ENCODE measurements at regions of chr22 and their contacts with region 1.

Region 1: GRCh38 chr22:49434101-49434611 is 393.5 kb downstream of the BRD1 start:
- DNase-seq: peak; percentile 58
- ATAC-seq: peak; percentile 73
- H3K4me3 ChIP-seq: no peak overlapping the region
- H3K27ac ChIP-seq: no peak overlapping the region
- H3K4me1 ChIP-seq: no peaks in the 10 kb centered on the region
- H3K27me3 ChIP-seq: peaks cover 84% of the 10 kb centered on the region
- CTCF ChIP-seq: peak; percentile 64

Region 2: DNA sequence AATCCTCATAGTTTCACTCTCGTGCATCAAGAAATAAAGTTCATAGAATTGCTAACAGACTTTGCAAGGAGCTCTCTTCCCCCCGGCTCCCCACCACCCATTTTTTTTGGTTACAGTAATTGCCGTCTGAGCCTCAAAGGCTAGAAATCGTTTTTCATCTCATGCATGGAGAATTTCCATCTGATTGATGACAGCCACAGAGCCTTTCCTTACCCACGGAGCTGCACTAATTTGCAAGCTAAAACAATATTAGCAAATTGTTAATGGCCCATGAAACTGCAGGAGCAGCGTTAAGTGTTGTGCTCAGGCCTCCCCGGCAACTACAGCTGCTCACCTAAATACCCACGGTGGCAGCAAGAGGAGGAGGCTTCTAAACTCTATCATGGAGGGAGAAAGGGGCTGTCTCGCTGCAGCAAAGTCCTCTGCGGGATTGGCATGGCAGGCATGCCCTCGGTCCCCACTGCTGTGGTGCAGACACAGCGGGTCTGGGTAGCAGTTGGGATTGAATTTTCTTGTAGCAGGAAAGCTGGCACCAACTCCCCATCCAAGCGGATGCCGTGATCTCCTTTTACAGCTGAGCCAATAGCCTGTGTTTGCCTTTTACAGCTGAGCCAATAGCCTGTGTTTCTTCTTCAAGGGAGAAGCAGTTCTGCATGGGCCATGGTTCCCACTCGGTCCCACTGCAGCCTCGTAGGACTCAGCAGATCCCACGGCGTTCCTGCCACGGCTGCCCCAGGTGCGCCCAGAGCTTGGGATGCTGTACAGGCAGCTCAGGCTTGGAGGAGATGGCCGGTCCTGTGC is 18.8 kb before region 1 on chr22:
- CTCF ChIA-PET with region 1: no interaction called
- POLR2A ChIA-PET with region 1: no interaction called
- intact Hi-C with region 1: no loop called
- DNase-seq: no peak
- ATAC-seq: no peak
- H3K4me3 ChIP-seq: no peak overlapping the region
- H3K27ac ChIP-seq: no peak overlapping the region
- H3K4me1 ChIP-seq: no peaks in the 10 kb centered on the region
- H3K27me3 ChIP-seq: peaks cover 50% of the 10 kb centered on the region
- CTCF ChIP-seq: no peak

Region 3: DNA sequence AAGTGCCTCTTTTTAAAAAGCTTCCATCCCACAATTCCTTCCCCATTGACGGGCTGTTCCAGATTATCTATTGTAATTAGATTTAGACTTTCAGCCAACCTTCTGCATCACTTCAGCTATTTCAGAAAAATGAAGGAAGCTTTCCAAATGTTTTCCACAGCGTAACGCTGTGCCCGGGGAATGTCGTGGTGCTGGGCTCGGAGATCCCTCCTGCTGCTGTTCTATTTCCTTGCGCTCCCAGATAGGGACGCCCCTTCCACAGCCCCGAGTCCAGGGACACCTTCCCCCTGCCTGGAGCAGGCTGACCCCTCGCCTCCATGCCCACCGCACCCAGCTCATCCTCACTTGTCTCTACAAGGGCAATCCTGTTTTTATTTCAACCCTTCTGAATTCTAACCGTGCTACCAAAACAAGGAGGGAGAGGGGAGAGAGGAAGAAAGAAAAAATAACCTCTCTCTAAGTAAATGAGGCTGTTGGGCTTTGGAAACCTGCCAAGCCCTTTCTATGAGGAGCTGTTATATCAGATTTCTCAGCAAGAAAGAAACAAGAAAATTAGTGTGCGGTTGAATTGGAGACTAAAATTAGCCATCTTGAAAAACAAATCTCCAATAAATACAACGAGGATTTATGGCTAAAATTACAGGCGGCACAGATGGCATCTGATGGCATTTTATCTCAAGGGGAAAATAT is 26.6 kb after region 1 on chr22:
- CTCF ChIA-PET with region 1: no interaction called
- POLR2A ChIA-PET with region 1: no interaction called
- intact Hi-C with region 1: no loop called
- DNase-seq: no peak
- ATAC-seq: no peak
- H3K4me3 ChIP-seq: no peak overlapping the region
- H3K27ac ChIP-seq: no peak overlapping the region
- H3K4me1 ChIP-seq: no peaks in the 10 kb centered on the region
- H3K27me3 ChIP-seq: peaks cover 79% of the 10 kb centered on the region
- CTCF ChIP-seq: no peak

Region 4: GRCh38 chr22:49502126-49502826 is 68.1 kb after region 1 on chr22:
- CTCF ChIA-PET with region 1: no interaction called
- POLR2A ChIA-PET with region 1: no interaction called
- intact Hi-C with region 1: no loop called
- DNase-seq: peak; percentile 78
- ATAC-seq: peak; percentile 64; the same call in 1 of the 2 replicates
- H3K4me3 ChIP-seq: peak overlapping the region; percentile 47
- H3K27ac ChIP-seq: peak overlapping the region; percentile 64
- H3K4me1 ChIP-seq: peaks cover 35% of the 10 kb centered on the region
- H3K27me3 ChIP-seq: no peaks in the 10 kb centered on the region
- CTCF ChIP-seq: no peak

Region 5: GRCh38 chr22:49604732-49605302 is 170.7 kb after region 1 on chr22:
- CTCF ChIA-PET with region 1: no interaction called
- POLR2A ChIA-PET with region 1: no interaction called
- intact Hi-C with region 1: loop called (anchors 1 kb)
- DNase-seq: peak; percentile 25
- ATAC-seq: no peak
- H3K4me3 ChIP-seq: no peak overlapping the region
- H3K27ac ChIP-seq: no peak overlapping the region
- H3K4me1 ChIP-seq: no peaks in the 10 kb centered on the region
- H3K27me3 ChIP-seq: peaks cover 96% of the 10 kb centered on the region
- CTCF ChIP-seq: peak; percentile 52

Region 6: DNA sequence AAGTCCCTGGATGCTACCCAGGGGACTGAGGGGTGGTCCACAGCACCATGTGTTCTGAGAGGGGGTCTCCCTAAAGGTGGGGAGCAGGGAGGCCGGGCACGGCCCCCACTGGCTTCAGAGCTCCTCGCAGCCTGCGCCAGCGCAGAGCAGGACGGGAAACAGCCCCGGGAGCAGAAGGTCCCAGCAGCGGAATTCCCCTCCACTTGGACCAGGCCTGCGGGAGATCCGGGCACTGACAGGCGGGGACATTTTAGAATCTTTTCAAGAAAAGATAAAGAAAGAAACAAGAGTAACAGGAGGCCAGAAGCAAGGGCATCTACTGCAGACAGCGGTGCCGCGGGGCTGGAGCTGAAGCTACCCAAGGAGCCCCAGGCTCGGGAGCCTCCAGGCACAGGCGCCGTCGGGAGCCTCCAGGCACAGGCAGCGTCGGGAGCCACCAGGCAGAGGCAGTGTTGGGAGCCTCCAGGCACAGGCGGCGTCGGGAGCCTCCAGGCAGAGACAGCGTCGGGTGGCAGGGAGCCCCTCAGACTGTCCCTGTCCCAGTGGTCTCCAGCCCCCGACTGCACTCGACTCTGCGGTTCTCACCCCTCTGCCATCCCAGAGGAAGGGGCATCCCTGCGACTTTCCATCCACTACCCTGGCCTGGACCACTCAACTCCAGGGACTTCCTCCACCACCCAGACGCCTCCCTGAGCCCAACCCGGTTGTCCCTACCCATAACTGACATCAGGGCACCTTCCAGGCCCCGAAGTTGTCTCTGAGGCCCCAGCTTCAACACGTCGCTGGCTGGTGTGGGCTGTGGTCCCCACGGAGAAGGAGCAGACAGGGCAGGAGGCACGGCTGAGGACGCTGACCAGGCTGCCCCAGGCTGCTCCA is 182.4 kb after region 1 on chr22:
- CTCF ChIA-PET with region 1: no interaction called
- POLR2A ChIA-PET with region 1: no interaction called
- intact Hi-C with region 1: no loop called
- DNase-seq: no peak
- ATAC-seq: no peak
- H3K4me3 ChIP-seq: no peak overlapping the region
- H3K27ac ChIP-seq: no peak overlapping the region
- H3K4me1 ChIP-seq: no peaks in the 10 kb centered on the region
- H3K27me3 ChIP-seq: peaks cover 74% of the 10 kb centered on the region
- CTCF ChIP-seq: no peak